Calu3 (cell line): ENCODE measurements at regions of chr1 and their contacts with region 1.

Region 1: GRCh38 chr1:207052911-207053769 is at the start of gene PFKFB2:
- DNase-seq: peak; percentile 100
- H3K4me3 Mint-ChIP-seq: peak within 1 kb of the TSS; percentile 97
- H3K27ac Mint-ChIP-seq: peak within 1 kb of the TSS; percentile 93
- H3K4me1 Mint-ChIP-seq: peaks cover 58% of the 10 kb centered on the region
- H3K27me3 Mint-ChIP-seq: no peaks in the 10 kb centered on the region
- CTCF ChIP-seq: peak; percentile 45
- total RNA-seq, gene PFKFB2: 52.0 and 54.4 TPM in 2 replicates

Region 2: DNA sequence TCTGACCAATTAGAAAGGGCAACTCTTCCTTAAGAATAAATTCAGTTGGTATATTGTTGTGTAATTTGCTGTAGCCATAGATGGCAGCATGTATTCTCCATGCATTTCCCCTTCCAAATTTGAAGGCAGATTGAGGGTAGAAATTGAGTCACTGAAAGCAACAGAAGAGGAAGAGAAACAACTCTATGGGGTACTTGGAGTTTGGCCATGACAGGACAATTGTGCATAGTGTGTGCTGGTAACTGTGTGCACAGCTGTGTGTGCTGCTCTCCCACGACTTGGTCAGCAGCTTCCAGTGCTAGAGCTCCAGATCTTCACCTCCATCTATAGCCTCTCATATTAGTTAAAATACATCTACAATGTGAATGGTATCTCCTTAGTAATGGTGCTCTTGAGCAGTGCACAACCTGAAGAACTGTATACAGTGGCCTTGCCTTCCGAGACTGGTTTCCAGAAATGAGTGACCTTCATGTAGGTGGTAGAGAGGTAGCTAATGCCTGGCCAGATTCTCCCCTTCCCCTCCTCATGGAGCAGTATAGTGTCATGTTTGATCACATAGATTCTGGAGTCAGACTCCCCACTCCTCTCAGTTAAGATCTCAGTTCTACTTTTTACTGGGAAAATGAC is 82.0 kb before region 1 on chr1:
- CTCF ChIA-PET with region 1: no interaction called
- intact Hi-C with region 1: no loop called
- DNase-seq: no peak
- H3K4me3 Mint-ChIP-seq: no peak overlapping the region
- H3K27ac Mint-ChIP-seq: no peak overlapping the region
- H3K4me1 Mint-ChIP-seq: peaks cover 45% of the 10 kb centered on the region
- H3K27me3 Mint-ChIP-seq: no peaks in the 10 kb centered on the region
- CTCF ChIP-seq: no peak

Region 3: DNA sequence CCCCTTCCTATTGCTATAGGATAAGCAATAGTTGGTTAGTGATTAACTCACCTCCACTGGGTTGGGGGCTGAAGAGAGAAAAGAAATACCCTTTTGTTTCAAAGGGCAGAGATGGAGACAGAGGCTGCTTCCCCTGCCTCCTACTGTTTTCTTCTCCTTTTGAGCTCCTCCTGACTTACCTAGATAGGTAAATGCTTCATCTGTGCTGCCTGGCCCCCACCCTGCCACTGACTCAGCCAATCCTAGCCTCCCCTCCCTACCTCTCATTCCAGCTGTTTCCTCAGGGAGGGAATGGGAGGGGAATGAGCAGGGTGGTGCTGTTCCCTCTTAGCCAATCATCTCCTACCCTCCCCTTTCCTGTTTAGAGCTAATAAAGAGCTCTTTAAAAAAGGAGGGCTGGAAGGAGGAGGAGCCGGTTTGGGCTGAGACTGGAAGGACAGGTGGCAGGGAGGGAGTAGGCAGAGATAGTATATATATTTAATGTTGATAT is 20.6 kb before region 1 on chr1 and contains the start of gene C1orf116:
- CTCF ChIA-PET with region 1: interaction called, 54 read pairs
- intact Hi-C with region 1: loop called (anchors 2 kb)
- DNase-seq: peak; percentile 92
- H3K4me3 Mint-ChIP-seq: peak within 1 kb of the TSS; percentile 92
- H3K27ac Mint-ChIP-seq: peak within 1 kb of the TSS; percentile 98
- H3K4me1 Mint-ChIP-seq: peaks cover 27% of the 10 kb centered on the region
- H3K27me3 Mint-ChIP-seq: no peaks in the 10 kb centered on the region
- CTCF ChIP-seq: no peak
- total RNA-seq, gene C1orf116: 106 and 124 TPM in 2 replicates

Region 4: GRCh38 chr1:207069858-207070506 is 16.8 kb after region 1 on chr1:
- CTCF ChIA-PET with region 1: no interaction called
- intact Hi-C with region 1: no loop called
- DNase-seq: no peak
- H3K4me3 Mint-ChIP-seq: no peak overlapping the region
- H3K27ac Mint-ChIP-seq: no peak overlapping the region
- H3K4me1 Mint-ChIP-seq: peaks cover 11% of the 10 kb centered on the region
- H3K27me3 Mint-ChIP-seq: no peaks in the 10 kb centered on the region
- CTCF ChIP-seq: no peak

Region 5: GRCh38 chr1:207124389-207124788 is 71.2 kb after region 1 on chr1:
- CTCF ChIA-PET with region 1: no interaction called
- intact Hi-C with region 1: no loop called
- DNase-seq: no peak
- H3K4me3 Mint-ChIP-seq: no peak overlapping the region
- H3K27ac Mint-ChIP-seq: no peak overlapping the region
- H3K4me1 Mint-ChIP-seq: no peaks in the 10 kb centered on the region
- H3K27me3 Mint-ChIP-seq: no peaks in the 10 kb centered on the region
- CTCF ChIP-seq: no peak